ENCODE measurements at regions of chr1 and their contacts with region 1.

Region 1: GRCh38 chr1:58783993-58784757 is at the start of gene JUN:
- DNase-seq: peak; percentile 99
- total RNA-seq, gene JUN: 91.7 TPM

Region 2: GRCh38 chr1:58754683-58755467 is 29.3 kb before region 1 on chr1:
- intact Hi-C with region 1: no loop called
- DNase-seq: peak; percentile 82

Region 3: DNA sequence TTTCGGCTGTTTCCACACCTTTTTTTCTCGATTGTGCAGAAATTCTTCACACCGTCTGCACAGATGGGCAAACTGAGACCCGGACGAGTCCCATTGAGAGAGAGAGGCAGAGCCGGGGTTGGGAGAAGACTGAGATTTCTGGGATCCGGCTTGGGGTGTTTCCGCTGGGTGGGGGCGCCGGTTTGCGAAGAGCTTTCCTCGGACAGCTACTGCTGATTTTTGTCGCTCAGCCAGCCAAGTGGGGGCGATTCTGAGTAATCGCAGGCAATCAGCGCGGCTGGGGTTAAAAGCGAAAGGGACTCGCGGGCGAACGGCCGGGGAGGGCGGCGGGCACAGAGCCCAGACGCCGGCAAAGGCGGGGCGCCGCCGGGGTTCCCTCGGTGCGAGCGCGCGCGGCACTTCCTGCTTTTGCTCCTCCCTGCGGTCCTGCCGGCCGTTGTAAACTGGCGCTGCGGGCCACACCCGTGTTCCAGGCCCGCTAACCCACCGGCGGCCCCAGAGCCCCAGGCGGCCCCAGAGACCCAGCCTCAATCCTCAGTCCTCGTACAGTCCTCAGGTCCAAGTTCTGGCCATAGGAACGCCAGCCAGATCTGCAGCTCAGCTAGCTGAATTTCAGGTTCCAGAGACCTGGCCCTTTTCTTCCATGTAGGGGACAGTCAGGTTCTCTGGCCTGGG is 32.0 kb after region 1 on chr1:
- intact Hi-C with region 1: loop called (anchors 1 kb)
- DNase-seq: peak; percentile 97

Region 4: DNA sequence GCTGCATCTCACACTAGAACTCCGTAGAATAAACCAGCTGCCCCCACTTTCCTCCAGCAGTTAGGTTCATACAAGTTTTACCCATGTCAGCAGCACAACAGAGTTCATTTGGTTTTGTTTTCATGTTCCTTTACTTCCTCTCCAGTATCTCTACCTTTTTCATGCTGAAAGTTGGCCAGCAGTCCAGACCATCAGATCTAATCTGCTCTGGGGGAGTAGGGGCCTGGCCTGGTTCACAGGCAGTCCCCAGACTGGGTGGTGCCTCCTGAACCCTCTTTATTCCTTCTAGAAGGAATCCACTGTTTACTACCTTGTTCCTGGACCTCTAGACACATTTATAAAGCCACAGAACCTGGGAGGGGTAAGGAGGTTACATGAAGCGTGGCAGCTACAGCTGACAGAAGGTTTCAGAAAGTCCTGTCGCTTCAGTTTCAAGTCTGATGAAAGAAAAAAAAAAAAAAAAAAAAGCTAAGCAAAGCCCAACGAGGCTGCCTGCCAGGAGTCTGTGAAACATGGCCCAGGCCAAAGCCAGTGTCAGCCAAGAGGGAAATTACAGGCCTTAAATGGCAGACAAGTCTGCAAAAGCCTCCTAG is 184.3 kb after region 1 on chr1:
- intact Hi-C with region 1: loop called (anchors 5 kb)
- DNase-seq: peak; percentile 82

Region 5: GRCh38 chr1:59057211-59057694 is 273.1 kb after region 1 on chr1:
- intact Hi-C with region 1: loop called (anchors 5 kb)
- DNase-seq: no peak

Region 6: GRCh38 chr1:59296358-59297256 is 512.4 kb after region 1 on chr1 and contains the start of gene FGGY:
- intact Hi-C with region 1: loop called (anchors 1 kb)
- DNase-seq: peak; percentile 99
- total RNA-seq, gene FGGY: 20.5 TPM

Region 7: GRCh38 chr1:59568158-59568935 is 784.2 kb after region 1 on chr1:
- intact Hi-C with region 1: loop called (anchors 5 kb)
- DNase-seq: no peak

Region 8: DNA sequence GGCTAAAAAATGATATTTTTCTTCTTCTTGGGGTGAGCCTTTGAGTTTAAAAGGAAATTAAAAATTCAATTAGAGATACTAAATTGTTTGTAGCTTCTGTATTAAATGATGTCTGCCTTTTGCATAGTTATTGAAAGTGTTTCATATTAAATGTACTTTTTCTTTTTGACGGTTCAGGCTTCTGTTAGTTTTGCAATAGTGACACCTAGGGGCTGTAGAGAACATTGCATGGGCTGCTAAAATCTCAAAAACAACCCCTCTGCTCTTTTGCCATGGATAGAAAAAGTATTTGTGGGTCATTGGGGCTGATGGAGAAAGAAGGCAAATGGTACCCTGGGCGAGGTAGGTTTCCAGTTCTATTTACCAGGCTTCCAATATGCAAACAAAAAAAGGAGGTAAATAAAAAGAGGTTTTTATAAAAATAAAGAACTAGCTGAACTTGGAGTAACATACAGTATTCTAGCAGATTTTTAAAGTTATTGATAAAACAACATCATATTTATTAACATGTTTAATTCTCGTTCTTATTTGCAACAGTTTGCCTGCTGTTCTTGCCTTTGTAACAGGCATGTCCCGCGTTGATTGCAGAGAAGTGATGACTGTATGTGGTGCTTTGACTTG is 915.2 kb after region 1 on chr1:
- intact Hi-C with region 1: loop called (anchors 5 kb)
- DNase-seq: no peak